Uterus (tissue), 4 donors: ENCODE measurements at regions of chr11 and their contacts with region 1.

Region 1: GRCh38 chr11:113289431-113290187 is 24.8 kb upstream of the TTC12 start:
- DNase-seq: peak; percentile 45 to 63
- H3K4me3 ChIP-seq: no peak overlapping the region
- H3K27ac ChIP-seq: no peak overlapping the region
- H3K4me1 ChIP-seq: no peaks in the 10 kb centered on the region
- H3K27me3 ChIP-seq: no peaks in the 10 kb centered on the region
- CTCF ChIP-seq: peak; percentile 85 to 90 (median 88)
- POLR2A ChIP-seq: no peak

Region 2: GRCh38 chr11:112588252-112588694 is 701.3 kb before region 1 on chr11:
- intact Hi-C with region 1: loop called (anchors 10 kb)
- DNase-seq: peak; percentile 59 to 84
- H3K4me3 ChIP-seq: no peak overlapping the region
- H3K27ac ChIP-seq: peak overlapping the region; percentile 75 to 83
- H3K4me1 ChIP-seq: no peaks in the 10 kb centered on the region
- H3K27me3 ChIP-seq: no peaks in the 10 kb centered on the region
- CTCF ChIP-seq: peak; percentile 67 to 79 (median 74)
- POLR2A ChIP-seq: no peak

Region 3: GRCh38 chr11:113546757-113547507 is 257.3 kb after region 1 on chr11:
- intact Hi-C with region 1: loop called (anchors 10 kb)
- DNase-seq: no peak
- H3K4me3 ChIP-seq: no peak overlapping the region
- H3K27ac ChIP-seq: no peak overlapping the region
- H3K4me1 ChIP-seq: no peaks in the 10 kb centered on the region
- H3K27me3 ChIP-seq: no peaks in the 10 kb centered on the region
- CTCF ChIP-seq: no peak
- POLR2A ChIP-seq: no peak